ENCODE measurements at regions of chr15 and their contacts with region 1.

Region 1: GRCh38 chr15:71800835-71801745 is 9.3 kb upstream of the NR2E3 start:
- DNase-seq: no peak
- H3K4me3 ChIP-seq: no peak overlapping the region
- H3K27ac ChIP-seq: no peak overlapping the region
- H3K4me1 ChIP-seq: no peaks in the 10 kb centered on the region
- H3K27me3 ChIP-seq: no peaks in the 10 kb centered on the region
- CTCF ChIP-seq: peak; percentile 23 to 80 (median 39)
- EP300 ChIP-seq: no peak
- POLR2A ChIP-seq: no peak

Region 2: DNA sequence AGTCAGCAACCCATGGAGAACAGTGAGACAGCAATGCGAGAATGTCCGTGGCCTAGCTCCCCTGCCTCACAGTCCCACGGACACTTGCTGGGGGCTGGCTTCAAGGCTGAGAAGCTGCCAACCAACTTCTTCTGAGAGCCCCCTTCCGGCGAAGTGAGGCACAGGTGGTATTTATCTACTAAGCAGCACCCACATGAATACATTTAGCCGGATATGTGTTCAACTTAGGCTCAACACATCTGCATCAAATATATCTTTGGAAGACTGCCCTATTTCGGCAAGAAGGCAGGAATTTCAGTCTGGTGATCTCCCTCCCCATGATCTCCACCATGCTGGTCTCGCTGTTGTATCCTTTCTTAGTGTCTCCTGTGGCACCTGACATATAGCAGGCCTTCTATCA is 331.7 kb before region 1 on chr15:
- intact Hi-C with region 1: loop called in 1 of 4 experiments (anchors 10 kb)
- DNase-seq: no peak
- H3K4me3 ChIP-seq: no peak overlapping the region
- H3K27ac ChIP-seq: no peak overlapping the region
- H3K4me1 ChIP-seq: no peaks in the 10 kb centered on the region
- H3K27me3 ChIP-seq: no peaks in the 10 kb centered on the region
- CTCF ChIP-seq: no peak
- EP300 ChIP-seq: no peak
- POLR2A ChIP-seq: no peak

Region 3: GRCh38 chr15:71737761-71738160 is 63.3 kb before region 1 on chr15:
- intact Hi-C with region 1: loop called in 1 of 4 experiments (anchors 2 kb)
- DNase-seq: no peak
- H3K4me3 ChIP-seq: no peak overlapping the region
- H3K27ac ChIP-seq: no peak overlapping the region
- H3K4me1 ChIP-seq: no peaks in the 10 kb centered on the region
- H3K27me3 ChIP-seq: no peaks in the 10 kb centered on the region
- CTCF ChIP-seq: no peak
- EP300 ChIP-seq: no peak
- POLR2A ChIP-seq: no peak

Region 4: DNA sequence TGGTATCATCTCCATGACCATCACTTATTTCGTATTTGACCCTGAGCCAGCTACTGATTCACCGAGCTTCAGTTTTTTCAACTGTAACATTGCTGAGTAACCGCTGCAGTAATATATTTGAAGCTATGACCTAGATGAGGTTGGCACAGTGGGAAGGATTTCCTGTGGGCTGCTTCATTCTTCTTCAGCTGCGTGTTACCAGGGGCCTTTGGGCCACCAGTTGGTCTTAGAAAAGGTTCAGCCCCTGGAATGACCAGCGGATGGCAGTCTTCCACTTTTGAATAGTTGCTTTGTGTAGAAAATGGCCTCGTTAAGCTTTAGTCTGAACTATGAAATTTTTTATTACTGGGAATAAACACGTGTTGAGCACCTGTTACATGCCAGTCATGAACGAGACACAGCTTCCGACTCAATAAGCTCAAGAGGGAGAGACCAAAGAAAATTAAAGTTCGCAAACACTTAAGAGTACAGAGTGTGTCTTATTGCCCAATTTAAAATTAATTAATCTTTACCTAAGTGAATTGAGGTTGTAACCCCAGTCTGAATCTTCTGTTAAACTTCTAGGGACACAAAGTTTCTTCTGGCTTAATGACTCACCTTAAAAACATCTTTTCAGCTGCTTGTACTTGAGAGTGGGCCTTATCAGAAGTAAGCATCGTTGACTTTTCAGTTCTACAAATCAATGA is 48.3 kb before region 1 on chr15:
- intact Hi-C with region 1: no loop called
- DNase-seq: no peak
- H3K4me3 ChIP-seq: no peak overlapping the region
- H3K27ac ChIP-seq: no peak overlapping the region
- H3K4me1 ChIP-seq: no peaks in the 10 kb centered on the region
- H3K27me3 ChIP-seq: no peaks in the 10 kb centered on the region
- CTCF ChIP-seq: no peak
- EP300 ChIP-seq: no peak
- POLR2A ChIP-seq: no peak

Measured in ovary (tissue), 10 donors.